SK-N-SH (cell line): ENCODE measurements at regions of chr7 and their contacts with region 1.

Region 1: DNA sequence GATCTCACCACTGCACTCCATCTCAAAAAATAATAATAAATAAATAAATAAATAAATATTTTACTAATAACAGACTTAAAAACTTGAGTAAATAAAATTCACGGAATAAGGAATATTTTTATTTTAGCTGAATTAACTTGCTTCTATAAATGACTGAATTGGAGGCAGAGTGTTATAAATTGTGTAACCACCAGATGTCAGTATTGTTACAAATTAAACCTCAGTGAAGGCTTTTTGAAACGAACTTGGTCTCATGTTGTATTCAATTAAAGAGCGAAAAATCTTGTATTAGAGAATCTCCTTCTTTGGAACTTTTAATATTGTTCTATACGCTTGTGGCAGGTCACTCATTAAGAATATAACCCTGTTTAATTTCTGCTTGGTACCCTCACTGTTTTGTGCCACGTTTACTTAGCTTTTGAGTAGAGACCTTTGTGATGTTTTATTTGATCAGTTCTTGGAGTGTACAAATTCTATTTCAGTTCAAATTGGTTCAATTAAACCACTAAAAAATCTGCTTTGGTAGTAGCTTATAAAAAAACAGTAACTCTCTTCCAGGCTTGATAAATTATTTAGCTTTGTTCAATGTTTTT is 45.6 kb upstream of the SCIN start:
- DNase-seq: peak; percentile 47
- H3K4me3 ChIP-seq: no peak overlapping the region; a peak in 1 of 4 replicates
- H3K27ac ChIP-seq: no peak overlapping the region
- H3K4me1 ChIP-seq: no peaks in the 10 kb centered on the region
- H3K27me3 ChIP-seq: no peaks in the 10 kb centered on the region; the same call in 1 of the 2 replicates
- CTCF ChIP-seq: peak; percentile 85
- EP300 ChIP-seq: no peak
- RAD21 ChIP-seq: peak; percentile 89

Region 2: GRCh38 chr7:12314199-12314598 is 210.7 kb before region 1 on chr7:
- CTCF ChIA-PET with region 1: no interaction called
- POLR2A ChIA-PET with region 1: no interaction called
- DNase-seq: no peak
- H3K4me3 ChIP-seq: no peak overlapping the region
- H3K27ac ChIP-seq: no peak overlapping the region
- H3K4me1 ChIP-seq: no peaks in the 10 kb centered on the region
- H3K27me3 ChIP-seq: no peaks in the 10 kb centered on the region
- CTCF ChIP-seq: no peak
- EP300 ChIP-seq: no peak
- RAD21 ChIP-seq: no peak

Region 3: DNA sequence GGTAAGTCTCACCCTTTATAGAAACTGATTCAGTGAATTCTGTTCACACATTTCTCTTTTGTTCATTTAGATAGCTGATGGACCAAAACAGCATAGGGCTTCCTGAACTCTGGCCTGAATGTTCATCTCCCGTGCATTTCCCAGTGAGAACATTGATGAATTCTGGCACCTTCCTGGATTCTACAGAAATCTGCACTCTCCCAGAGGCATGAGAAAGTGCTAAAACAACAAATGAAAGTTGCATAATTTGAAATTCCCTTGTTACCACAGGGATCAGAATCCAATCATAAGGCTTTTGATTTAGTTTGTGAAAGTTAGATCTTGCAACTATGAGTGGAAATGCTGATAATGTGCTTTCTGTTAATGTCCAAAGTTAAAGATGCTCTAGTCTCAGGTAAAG is 16.0 kb after region 1 on chr7:
- CTCF ChIA-PET with region 1: interaction called, 28 read pairs
- POLR2A ChIA-PET with region 1: no interaction called
- DNase-seq: no peak
- H3K4me3 ChIP-seq: no peak overlapping the region
- H3K27ac ChIP-seq: no peak overlapping the region
- H3K4me1 ChIP-seq: no peaks in the 10 kb centered on the region
- H3K27me3 ChIP-seq: no peaks in the 10 kb centered on the region; the same call in 1 of the 2 replicates
- CTCF ChIP-seq: no peak
- EP300 ChIP-seq: no peak
- RAD21 ChIP-seq: no peak

Region 4: DNA sequence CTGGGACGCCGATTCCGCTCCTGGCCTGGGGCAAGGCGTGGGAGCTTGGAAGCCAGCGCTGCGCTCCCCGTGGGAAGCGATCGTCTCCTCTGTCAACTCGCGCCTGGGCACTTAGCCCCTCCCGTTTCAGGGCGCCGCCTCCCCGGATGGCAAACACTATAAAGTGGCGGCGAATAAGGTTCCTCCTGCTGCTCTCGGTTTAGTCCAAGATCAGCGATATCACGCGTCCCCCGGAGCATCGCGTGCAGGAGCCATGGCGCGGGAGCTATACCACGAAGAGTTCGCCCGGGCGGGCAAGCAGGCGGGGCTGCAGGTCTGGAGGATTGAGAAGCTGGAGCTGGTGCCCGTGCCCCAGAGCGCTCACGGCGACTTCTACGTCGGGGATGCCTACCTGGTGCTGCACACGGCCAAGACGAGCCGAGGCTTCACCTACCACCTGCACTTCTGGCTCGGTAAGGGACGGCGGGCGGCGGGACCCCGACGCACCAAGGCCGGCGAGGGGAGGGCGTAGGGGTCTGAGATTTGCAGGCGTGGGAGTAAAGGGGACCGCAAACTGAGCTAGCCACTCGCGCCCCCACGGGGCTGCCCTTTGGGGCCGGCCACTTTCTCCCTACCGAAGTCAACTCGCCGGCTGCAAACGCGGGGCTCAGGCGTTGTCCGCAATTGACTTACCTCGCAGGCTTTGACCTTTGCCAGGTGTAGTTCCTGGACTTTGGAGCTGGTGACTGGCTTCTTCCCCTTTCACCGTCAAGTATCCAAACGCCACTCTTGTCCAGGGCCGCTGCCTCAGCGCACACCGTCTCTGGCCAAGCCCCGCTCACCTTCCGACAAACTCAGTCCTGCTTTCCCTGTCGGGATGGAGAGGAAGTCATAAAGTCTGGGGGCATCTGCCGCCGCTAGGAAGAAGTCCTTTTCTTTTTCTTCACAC is 45.9 kb after region 1 on chr7 and contains the start of gene SCIN:
- CTCF ChIA-PET with region 1: interaction called, 14 read pairs
- POLR2A ChIA-PET with region 1: no interaction called
- DNase-seq: peak; percentile 73
- H3K4me3 ChIP-seq: peak within 1 kb of the TSS; percentile 45 to 46
- H3K27ac ChIP-seq: no peak within 1 kb of the TSS
- H3K4me1 ChIP-seq: peaks cover 0 to 13% of the 10 kb centered on the region in 2 experiments; a peak in 1 of 4 replicates
- H3K27me3 ChIP-seq: peaks cover 35% of the 10 kb centered on the region
- CTCF ChIP-seq: no peak
- EP300 ChIP-seq: no peak
- RAD21 ChIP-seq: no peak
- polyA plus RNA-seq, gene SCIN: 0.02 TPM in 2 replicates

Region 5: GRCh38 chr7:12607134-12607533 is 82.2 kb after region 1 on chr7:
- CTCF ChIA-PET with region 1: interaction called, 21 read pairs
- POLR2A ChIA-PET with region 1: no interaction called
- DNase-seq: peak; percentile 39
- H3K4me3 ChIP-seq: no peak overlapping the region
- H3K27ac ChIP-seq: peak overlapping the region in 1 of 2 experiments; percentile 41; a peak in 2 of 4 replicates
- H3K4me1 ChIP-seq: peaks cover 0 to 7% of the 10 kb centered on the region in 2 experiments; a peak in 2 of 4 replicates
- H3K27me3 ChIP-seq: no peaks in the 10 kb centered on the region
- CTCF ChIP-seq: no peak
- EP300 ChIP-seq: peak in 1 of 2 experiments; percentile 22; a peak in 1 of 4 replicates
- RAD21 ChIP-seq: no peak

Region 6: GRCh38 chr7:12630513-12630819 is 105.6 kb after region 1 on chr7:
- CTCF ChIA-PET with region 1: interaction called, 42 read pairs
- POLR2A ChIA-PET with region 1: no interaction called
- DNase-seq: peak; percentile 23
- H3K4me3 ChIP-seq: no peak overlapping the region
- H3K27ac ChIP-seq: no peak overlapping the region
- H3K4me1 ChIP-seq: peaks cover 0 to 5% of the 10 kb centered on the region in 2 experiments; a peak in 2 of 4 replicates
- H3K27me3 ChIP-seq: peaks cover 15% of the 10 kb centered on the region
- CTCF ChIP-seq: no peak
- EP300 ChIP-seq: 0 out of 4 replicates have a peak, but pooled peaks of 1 of the 2 experiments have one; percentile 38
- RAD21 ChIP-seq: no peak

Region 7: DNA sequence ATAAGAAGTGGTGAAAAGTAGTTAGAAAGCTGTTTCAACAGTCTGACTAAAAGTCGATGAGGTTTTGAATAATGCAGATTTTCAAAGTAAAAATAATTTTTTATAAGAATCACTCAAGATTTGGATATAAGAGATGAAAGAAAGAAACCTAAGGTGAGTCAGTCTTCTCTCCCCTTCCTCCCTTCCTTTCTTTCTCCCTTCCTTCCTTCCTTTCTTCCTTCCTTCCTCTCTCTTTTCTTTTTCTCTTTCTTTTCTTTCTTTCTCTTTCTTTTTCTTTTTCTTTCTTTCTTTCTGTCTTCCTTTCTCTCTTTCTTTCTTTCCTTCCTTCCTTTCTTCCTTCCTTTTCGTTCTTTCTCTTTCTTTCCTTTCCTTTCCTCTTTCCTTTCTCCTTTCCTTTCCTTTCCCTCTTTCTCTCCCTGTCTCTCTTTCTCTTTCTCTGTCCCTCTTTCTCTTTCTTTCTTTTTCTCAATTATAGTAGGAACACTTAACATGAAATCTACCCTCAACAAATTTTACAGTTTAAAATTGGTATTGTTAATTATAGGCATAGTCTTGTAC is 471.1 kb after region 1 on chr7:
- CTCF ChIA-PET with region 1: no interaction called
- POLR2A ChIA-PET with region 1: no interaction called
- DNase-seq: no peak
- H3K4me3 ChIP-seq: no peak overlapping the region
- H3K27ac ChIP-seq: no peak overlapping the region
- H3K4me1 ChIP-seq: no peaks in the 10 kb centered on the region
- H3K27me3 ChIP-seq: 0 out of 2 replicates have a peak, but pooled peaks cover 3% of the 10 kb centered on the region
- CTCF ChIP-seq: no peak
- EP300 ChIP-seq: no peak
- RAD21 ChIP-seq: no peak

Region 8: GRCh38 chr7:13262929-13263530 is 738.1 kb after region 1 on chr7:
- CTCF ChIA-PET with region 1: interaction called, 36 read pairs
- POLR2A ChIA-PET with region 1: no interaction called
- DNase-seq: peak; percentile 5
- H3K4me3 ChIP-seq: no peak overlapping the region
- H3K27ac ChIP-seq: no peak overlapping the region
- H3K4me1 ChIP-seq: no peaks in the 10 kb centered on the region
- H3K27me3 ChIP-seq: no peaks in the 10 kb centered on the region; the same call in 1 of the 2 replicates
- CTCF ChIP-seq: peak; percentile 85
- EP300 ChIP-seq: no peak
- RAD21 ChIP-seq: peak; percentile 90